Aorta (tissue), 5 donors: ENCODE measurements at regions of chr1 and their contacts with region 1.

Region 1: GRCh38 chr1:201114236-201115131 is 2.3 kb upstream of the CACNA1S start:
- DNase-seq: peak; percentile 90 to 94
- ATAC-seq: peak; percentile 93
- H3K4me3 ChIP-seq: peak overlapping the region; percentile 18 to 38
- H3K27ac ChIP-seq: no peak overlapping the region
- H3K4me1 ChIP-seq: no peaks in the 10 kb centered on the region
- H3K27me3 ChIP-seq: no peaks in the 10 kb centered on the region

Region 2: GRCh38 chr1:201023517-201023902 is 91.0 kb before region 1 on chr1 and contains the start of gene KIF21B:
- intact Hi-C with region 1: loop called in 1 of 2 experiments (anchors 10 kb)
- DNase-seq: peak; percentile 86 to 93
- ATAC-seq: peak; percentile 80
- H3K4me3 ChIP-seq: peak within 1 kb of the TSS; percentile 18 to 45
- H3K27ac ChIP-seq: no peak within 1 kb of the TSS
- H3K4me1 ChIP-seq: no peaks in the 10 kb centered on the region
- H3K27me3 ChIP-seq: no peaks in the 10 kb centered on the region
- total RNA-seq, gene KIF21B: 4.0 to 4.6 TPM

Region 3: GRCh38 chr1:201049248-201049831 is 65.1 kb before region 1 on chr1:
- intact Hi-C with region 1: loop called in 1 of 2 experiments (anchors 5 kb)
- DNase-seq: no peak
- ATAC-seq: no peak
- H3K4me3 ChIP-seq: no peak overlapping the region
- H3K27ac ChIP-seq: no peak overlapping the region
- H3K4me1 ChIP-seq: no peaks in the 10 kb centered on the region
- H3K27me3 ChIP-seq: no peaks in the 10 kb centered on the region

Region 4: DNA sequence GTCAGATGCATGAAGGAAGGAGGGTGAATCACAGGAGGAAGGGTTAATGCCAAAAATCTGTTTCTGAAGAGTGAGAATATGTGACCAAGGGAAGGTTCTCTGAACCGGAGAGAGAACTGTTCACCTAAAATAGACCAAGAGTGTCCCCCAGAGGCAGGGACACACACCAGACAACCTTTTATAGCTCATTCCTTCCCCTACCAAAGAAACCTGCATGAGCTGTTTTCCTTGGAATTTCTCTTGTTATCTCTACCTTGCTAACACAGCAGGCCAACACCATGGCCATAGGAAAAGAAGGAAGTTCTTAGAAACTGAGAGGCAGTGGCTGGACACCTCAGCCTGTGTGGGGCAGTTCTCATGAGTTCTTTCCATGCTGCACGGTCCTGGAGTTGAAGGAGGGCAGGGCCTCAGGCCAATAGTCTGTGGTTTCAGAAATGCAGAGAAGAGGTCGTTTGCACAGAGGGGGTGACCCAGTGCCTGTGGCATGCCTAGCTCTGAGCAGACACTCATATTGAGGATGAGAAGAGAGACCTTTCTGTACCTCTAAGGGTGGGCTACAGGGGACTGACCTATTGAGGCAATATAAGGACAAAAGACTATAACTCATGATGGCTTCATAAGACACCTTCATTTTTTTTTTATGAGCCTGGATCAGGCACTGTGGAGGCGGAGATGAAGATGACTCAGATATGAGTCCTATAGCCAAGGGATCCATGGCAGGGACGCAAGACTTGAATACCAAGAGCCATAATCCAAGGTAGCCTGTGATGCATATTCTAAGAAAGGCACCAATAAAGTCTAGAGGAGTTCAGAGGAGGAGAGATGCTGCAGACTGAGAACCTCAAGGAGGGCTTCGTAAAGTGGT is 115.5 kb after region 1 on chr1:
- intact Hi-C with region 1: no loop called
- DNase-seq: no peak
- ATAC-seq: no peak
- H3K4me3 ChIP-seq: no peak overlapping the region
- H3K27ac ChIP-seq: no peak overlapping the region
- H3K4me1 ChIP-seq: no peaks in the 10 kb centered on the region
- H3K27me3 ChIP-seq: no peaks in the 10 kb centered on the region